ENCODE measurements at regions of chr4 and their contacts with region 1.

Region 1: GRCh38 chr4:108620101-108620932 is at the start of gene RPL34:
- DNase-seq: peak; percentile 97
- ATAC-seq: peak; percentile 98
- H3K4me3 ChIP-seq: peak within 1 kb of the TSS; percentile 62 to 90
- H3K27ac ChIP-seq: peak within 1 kb of the TSS; percentile 71
- H3K4me1 ChIP-seq: peaks cover 0 to 21% of the 10 kb centered on the region in 2 experiments; a peak in 3 of 4 replicates
- H3K27me3 ChIP-seq: no peaks in the 10 kb centered on the region
- CTCF ChIP-seq: no peak
- POLR2A ChIP-seq: peak; percentile 94
- RAD21 ChIP-seq: no peak
- total RNA-seq, gene RPL34: 1,359 TPM

Region 2: DNA sequence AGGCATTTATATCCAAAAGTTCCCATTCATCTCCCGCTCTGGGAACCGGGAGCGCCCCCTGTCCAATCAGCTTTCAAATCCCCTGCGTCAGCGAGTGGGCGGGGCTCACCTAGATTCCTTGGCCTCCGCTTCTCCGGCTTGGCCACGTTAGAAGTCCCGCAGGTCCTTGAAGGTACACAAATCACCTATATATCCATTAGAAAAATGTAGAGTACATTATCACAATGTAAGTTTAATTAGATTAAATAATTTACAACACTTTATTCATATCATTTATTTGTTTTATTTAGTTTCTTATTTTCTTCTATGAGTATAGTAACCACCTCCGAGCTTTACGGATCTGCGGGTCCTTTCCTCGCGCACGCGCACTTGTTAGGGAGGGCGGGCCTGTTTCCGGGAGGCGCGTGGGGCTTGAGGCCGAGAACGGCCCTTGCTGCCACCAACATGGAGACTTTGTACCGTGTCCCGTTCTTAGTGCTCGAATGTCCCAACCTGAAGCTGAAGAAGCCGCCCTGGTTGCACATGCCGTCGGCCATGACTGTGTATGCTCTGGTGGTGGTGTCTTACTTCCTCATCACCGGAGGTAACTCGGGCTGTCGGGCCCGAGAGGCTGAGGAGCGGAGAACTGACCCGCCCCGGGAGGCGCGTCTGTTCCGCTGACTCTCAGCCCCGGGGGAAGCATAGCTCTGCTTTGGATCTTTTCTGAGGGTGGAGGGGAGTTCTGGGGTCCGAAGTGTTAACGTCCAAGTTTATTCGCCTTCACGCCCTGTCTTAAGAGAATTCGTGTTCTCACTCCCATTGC is 30.1 kb after region 1 on chr4 and contains the start of gene OSTC:
- CTCF ChIA-PET with region 1: no interaction called
- POLR2A ChIA-PET with region 1: no interaction called
- RAD21 ChIA-PET with region 1: no interaction called
- intact Hi-C with region 1: loop called (anchors 1 kb)
- DNase-seq: peak; percentile 95
- ATAC-seq: peak; percentile 91
- H3K4me3 ChIP-seq: peak within 1 kb of the TSS; percentile 65 to 84
- H3K27ac ChIP-seq: peak within 1 kb of the TSS; percentile 49
- H3K4me1 ChIP-seq: peaks cover 4 to 6% of the 10 kb centered on the region in 2 experiments; a peak in 3 of 4 replicates
- H3K27me3 ChIP-seq: no peaks in the 10 kb centered on the region
- CTCF ChIP-seq: no peak
- POLR2A ChIP-seq: peak; percentile 46
- RAD21 ChIP-seq: no peak
- total RNA-seq, gene OSTC: 105 TPM

Region 3: GRCh38 chr4:109278594-109279031 is 658.3 kb after region 1 on chr4:
- CTCF ChIA-PET with region 1: no interaction called
- POLR2A ChIA-PET with region 1: no interaction called
- RAD21 ChIA-PET with region 1: no interaction called
- intact Hi-C with region 1: loop called (anchors 5 kb)
- DNase-seq: no peak
- ATAC-seq: no peak
- H3K4me3 ChIP-seq: no peak overlapping the region
- H3K27ac ChIP-seq: no peak overlapping the region
- H3K4me1 ChIP-seq: no peaks in the 10 kb centered on the region
- H3K27me3 ChIP-seq: peaks cover 72% of the 10 kb centered on the region
- CTCF ChIP-seq: no peak
- POLR2A ChIP-seq: no peak
- RAD21 ChIP-seq: no peak

Measured in HCT116 (cell line).